HepG2 (cell line): ENCODE measurements at regions of chr9 and their contacts with region 1.

Region 1: GRCh38 chr9:37790096-37790495 is 5.2 kb upstream of the EXOSC3 start:
- DNase-seq: no peak
- ATAC-seq: no peak
- H3K4me3 ChIP-seq: no peak overlapping the region
- H3K27ac ChIP-seq: no peak overlapping the region
- H3K4me1 ChIP-seq: peaks cover 17% of the 10 kb centered on the region
- H3K27me3 ChIP-seq: no peaks in the 10 kb centered on the region
- CTCF ChIP-seq: no peak
- EP300 ChIP-seq: no peak
- POLR2A ChIP-seq: no peak
- RAD21 ChIP-seq: no peak

Region 2: DNA sequence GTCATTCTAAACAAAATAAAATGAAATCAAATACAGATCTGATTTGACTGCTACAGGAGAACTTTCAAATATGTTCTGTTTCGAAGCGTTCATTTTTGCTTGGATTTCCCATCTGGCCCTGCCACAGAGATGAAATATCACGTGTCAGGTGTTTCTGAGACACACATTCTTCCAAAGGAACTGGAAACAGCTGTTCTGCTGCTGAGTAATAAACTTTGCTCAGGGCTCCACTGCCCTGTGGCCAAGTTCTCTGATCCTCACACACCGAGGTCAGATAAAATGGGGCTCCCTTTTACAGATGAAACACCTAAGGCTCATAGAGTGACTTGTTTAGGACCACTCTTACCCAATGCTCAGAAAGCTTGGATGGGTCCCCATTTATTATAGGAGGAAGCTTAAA is 96.8 kb before region 1 on chr9:
- CTCF ChIA-PET with region 1: no interaction called
- POLR2A ChIA-PET with region 1: no interaction called
- in situ Hi-C with region 1: no loop called
- intact Hi-C with region 1: no loop called
- DNase-seq: no peak
- ATAC-seq: no peak
- H3K4me3 ChIP-seq: no peak overlapping the region
- H3K27ac ChIP-seq: no peak overlapping the region
- H3K4me1 ChIP-seq: no peaks in the 10 kb centered on the region
- H3K27me3 ChIP-seq: peaks cover 2 to 23% of the 10 kb centered on the region in 2 experiments; a peak in 2 of 5 replicates
- CTCF ChIP-seq: no peak
- EP300 ChIP-seq: no peak
- POLR2A ChIP-seq: no peak
- RAD21 ChIP-seq: no peak

Region 3: DNA sequence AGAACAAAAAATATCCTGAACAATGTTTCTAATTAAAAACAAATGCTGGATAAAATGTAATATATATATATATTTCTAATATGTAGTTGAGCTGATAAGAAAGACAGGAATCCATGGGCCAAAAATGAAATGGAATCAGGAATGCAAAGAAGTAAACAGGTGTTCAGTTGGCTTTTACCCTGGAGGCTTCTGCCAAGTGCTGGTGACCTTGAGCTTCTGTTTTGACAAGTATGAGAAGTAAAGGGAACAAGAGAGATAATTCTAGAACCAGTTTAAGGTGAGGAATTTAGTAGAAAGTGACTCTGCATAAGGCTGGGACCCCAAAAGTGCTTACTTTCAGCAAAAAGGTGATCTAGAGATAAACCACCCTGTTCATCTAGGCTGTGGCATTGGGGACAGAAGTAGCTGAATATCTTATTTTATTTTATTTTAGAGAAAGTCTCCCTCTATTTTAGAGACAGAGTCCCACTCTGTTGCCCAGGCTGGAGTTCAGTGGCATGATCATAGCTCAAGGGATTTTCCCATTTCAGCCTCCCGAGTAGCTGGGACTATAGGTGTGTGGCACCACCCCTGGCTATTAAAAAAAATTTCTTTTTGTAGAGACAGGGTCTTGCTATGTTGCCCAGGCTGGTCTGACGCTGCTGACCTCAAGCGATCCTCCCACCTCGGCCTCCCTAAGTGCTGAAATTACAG is 37.5 kb after region 1 on chr9:
- CTCF ChIA-PET with region 1: no interaction called
- POLR2A ChIA-PET with region 1: no interaction called
- in situ Hi-C with region 1: no loop called
- intact Hi-C with region 1: no loop called
- DNase-seq: no peak
- ATAC-seq: no peak
- H3K4me3 ChIP-seq: no peak overlapping the region
- H3K27ac ChIP-seq: no peak overlapping the region
- H3K4me1 ChIP-seq: no peaks in the 10 kb centered on the region
- H3K27me3 ChIP-seq: no peaks in the 10 kb centered on the region
- CTCF ChIP-seq: no peak
- EP300 ChIP-seq: no peak
- POLR2A ChIP-seq: no peak
- RAD21 ChIP-seq: no peak

Region 4: DNA sequence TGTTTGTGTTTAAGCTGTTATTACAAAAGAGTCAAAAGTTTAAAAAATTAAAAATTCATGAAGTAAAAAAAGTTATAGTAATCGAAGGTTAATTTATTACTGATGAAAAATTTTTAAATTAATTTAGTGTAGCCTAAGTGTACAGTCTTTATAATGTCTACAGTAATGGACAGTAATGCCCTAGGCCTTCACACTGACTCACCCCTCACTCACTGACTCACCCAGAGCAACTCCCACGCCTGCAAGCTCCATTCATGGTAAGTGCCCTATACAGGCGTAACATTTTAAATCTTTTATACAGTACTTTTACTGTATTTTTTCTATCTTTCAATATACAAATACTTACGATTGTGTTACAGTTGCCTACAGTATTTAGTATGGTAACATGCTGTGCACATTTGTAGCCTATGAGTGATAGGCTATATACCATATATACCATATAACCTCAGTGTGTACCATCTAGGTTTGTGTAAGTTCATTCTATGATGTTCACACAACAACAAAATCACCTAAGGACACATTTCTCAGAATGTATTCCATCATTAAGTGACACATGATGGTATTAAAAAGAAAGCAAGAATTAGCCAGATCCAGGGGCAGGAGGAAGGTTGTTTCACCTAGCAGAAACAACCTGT is 50.6 kb after region 1 on chr9:
- CTCF ChIA-PET with region 1: no interaction called
- POLR2A ChIA-PET with region 1: no interaction called
- in situ Hi-C with region 1: loop called (anchors 5 kb)
- intact Hi-C with region 1: no loop called
- DNase-seq: no peak
- ATAC-seq: no peak
- H3K4me3 ChIP-seq: no peak overlapping the region
- H3K27ac ChIP-seq: no peak overlapping the region
- H3K4me1 ChIP-seq: no peaks in the 10 kb centered on the region
- H3K27me3 ChIP-seq: no peaks in the 10 kb centered on the region
- CTCF ChIP-seq: no peak
- EP300 ChIP-seq: no peak
- POLR2A ChIP-seq: no peak
- RAD21 ChIP-seq: no peak

Region 5: GRCh38 chr9:37889536-37889935 is 99.4 kb after region 1 on chr9:
- CTCF ChIA-PET with region 1: no interaction called
- POLR2A ChIA-PET with region 1: no interaction called
- in situ Hi-C with region 1: no loop called
- intact Hi-C with region 1: no loop called
- DNase-seq: no peak
- ATAC-seq: no peak
- H3K4me3 ChIP-seq: no peak overlapping the region
- H3K27ac ChIP-seq: no peak overlapping the region
- H3K4me1 ChIP-seq: no peaks in the 10 kb centered on the region
- H3K27me3 ChIP-seq: no peaks in the 10 kb centered on the region
- CTCF ChIP-seq: no peak
- EP300 ChIP-seq: no peak
- POLR2A ChIP-seq: no peak
- RAD21 ChIP-seq: no peak

Region 6: DNA sequence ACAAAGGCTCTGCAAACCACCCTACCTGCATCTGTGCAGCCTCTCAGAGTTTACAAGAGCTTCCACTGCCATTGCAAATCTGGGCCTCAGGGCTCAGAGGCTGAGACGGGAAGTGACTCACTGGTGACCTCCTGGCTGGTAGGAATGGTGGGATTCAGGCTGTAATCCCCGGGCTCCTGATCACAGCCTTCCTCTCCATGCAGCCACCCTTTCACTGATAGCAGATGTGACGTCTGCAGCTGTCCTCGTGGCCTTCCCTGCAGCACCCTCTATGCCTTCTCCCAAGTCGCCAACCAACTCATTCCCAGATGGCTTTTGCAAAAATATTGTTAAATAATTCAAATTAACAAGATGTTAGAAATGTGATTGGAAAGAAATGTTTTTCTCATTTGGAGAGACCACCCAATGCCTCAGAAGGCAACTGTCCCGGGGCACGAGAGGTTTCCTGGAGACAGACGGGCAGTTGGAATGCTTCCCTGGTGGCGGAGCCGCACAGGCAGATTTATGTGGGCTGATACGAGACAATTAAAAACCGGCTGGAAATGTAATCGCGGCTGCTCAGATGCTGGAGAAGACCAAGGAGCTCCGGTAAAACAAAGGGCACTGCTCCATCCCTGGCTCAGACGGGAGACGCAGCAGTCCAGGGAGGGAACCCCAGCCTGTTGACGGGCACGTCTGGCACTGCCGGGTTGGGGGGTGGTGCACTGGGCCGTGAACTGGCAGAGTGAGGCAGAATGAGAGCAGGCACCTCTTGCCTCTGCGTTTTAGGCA is 148.2 kb after region 1 on chr9:
- CTCF ChIA-PET with region 1: no interaction called
- POLR2A ChIA-PET with region 1: no interaction called
- in situ Hi-C with region 1: no loop called
- intact Hi-C with region 1: no loop called
- DNase-seq: no peak
- ATAC-seq: no peak
- H3K4me3 ChIP-seq: no peak overlapping the region
- H3K27ac ChIP-seq: no peak overlapping the region
- H3K4me1 ChIP-seq: peaks cover 32% of the 10 kb centered on the region
- H3K27me3 ChIP-seq: no peaks in the 10 kb centered on the region
- CTCF ChIP-seq: no peak
- EP300 ChIP-seq: no peak
- POLR2A ChIP-seq: no peak
- RAD21 ChIP-seq: no peak